Heart left ventricle (tissue), 16 donors: ENCODE measurements at regions of chr11 and their contacts with region 1.

Region 1: GRCh38 chr11:112289588-112290492 is 29.2 kb upstream of the PLET1 start:
- DNase-seq: peak; percentile 83 to 93 (median 88)
- ATAC-seq: peak; percentile 60 to 90 (median 87)
- H3K4me3 ChIP-seq: peak overlapping the region; percentile 49 to 89 (median 62)
- H3K27ac ChIP-seq: peak overlapping the region; percentile 24 to 91 (median 80)
- H3K4me1 ChIP-seq: peaks cover 0 to 44% (median 16%) of the 10 kb centered on the region in 12 donors
- H3K27me3 ChIP-seq: no peaks in the 10 kb centered on the region
- CTCF ChIP-seq: peak; percentile 66 to 96 (median 87)
- POLR2A ChIP-seq: peak in 1 of 2 donors; percentile 66

Region 2: DNA sequence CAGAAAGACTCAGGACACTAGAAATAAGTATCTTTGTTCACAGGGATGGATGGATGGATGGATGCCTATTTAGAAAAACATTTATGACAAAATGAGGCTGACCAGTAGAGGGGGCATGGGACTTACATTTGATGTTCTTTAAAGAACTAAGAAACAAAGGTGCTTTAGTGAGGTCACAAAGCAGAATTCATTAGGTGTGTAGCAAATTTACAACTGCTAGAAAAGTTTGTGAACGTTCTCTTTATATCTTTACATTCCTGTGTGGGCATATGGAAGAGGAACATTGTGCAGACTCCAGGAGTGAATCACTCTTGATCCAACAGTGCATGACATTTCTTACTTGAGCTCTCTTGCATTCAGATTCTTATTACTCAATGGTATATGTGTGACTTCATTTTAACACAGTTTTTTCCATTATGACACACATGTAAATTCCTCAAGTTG is 703.4 kb before region 1 on chr11:
- intact Hi-C with region 1: no loop called
- DNase-seq: no peak
- ATAC-seq: peak in 3 of 4 donors; percentile 42 to 62 (median 49)
- H3K4me3 ChIP-seq: no peak overlapping the region
- H3K27ac ChIP-seq: no peak overlapping the region
- H3K4me1 ChIP-seq: peaks cover 0 to 5% (median 0%) of the 10 kb centered on the region in 12 donors
- H3K27me3 ChIP-seq: no peaks in the 10 kb centered on the region
- CTCF ChIP-seq: peak; percentile 27 to 71 (median 56)
- POLR2A ChIP-seq: no peak

Region 3: GRCh38 chr11:111819161-111819828 is 470.5 kb before region 1 on chr11:
- intact Hi-C with region 1: no loop called
- DNase-seq: peak in 4 of 5 donors; percentile 38 to 69 (median 42)
- ATAC-seq: peak; percentile 86 to 95 (median 93)
- H3K4me3 ChIP-seq: no peak overlapping the region
- H3K27ac ChIP-seq: peak overlapping the region; percentile 44 to 91 (median 74)
- H3K4me1 ChIP-seq: peaks cover 5 to 32% (median 20%) of the 10 kb centered on the region in 12 donors
- H3K27me3 ChIP-seq: no peaks in the 10 kb centered on the region
- CTCF ChIP-seq: no peak
- POLR2A ChIP-seq: no peak

Region 4: GRCh38 chr11:112453601-112454577 is 164.0 kb after region 1 on chr11:
- intact Hi-C with region 1: loop called in 6 of 10 experiments (anchors 2 to 10 kb)
- DNase-seq: peak in 2 of 5 donors; percentile 44 to 51
- ATAC-seq: peak in 3 of 4 donors; percentile 37 to 61 (median 48)
- H3K4me3 ChIP-seq: no peak overlapping the region
- H3K27ac ChIP-seq: no peak overlapping the region
- H3K4me1 ChIP-seq: peaks cover 0 to 3% (median 0%) of the 10 kb centered on the region in 12 donors
- H3K27me3 ChIP-seq: no peaks in the 10 kb centered on the region
- CTCF ChIP-seq: peak; percentile 24 to 52 (median 32)
- POLR2A ChIP-seq: no peak

Region 5: DNA sequence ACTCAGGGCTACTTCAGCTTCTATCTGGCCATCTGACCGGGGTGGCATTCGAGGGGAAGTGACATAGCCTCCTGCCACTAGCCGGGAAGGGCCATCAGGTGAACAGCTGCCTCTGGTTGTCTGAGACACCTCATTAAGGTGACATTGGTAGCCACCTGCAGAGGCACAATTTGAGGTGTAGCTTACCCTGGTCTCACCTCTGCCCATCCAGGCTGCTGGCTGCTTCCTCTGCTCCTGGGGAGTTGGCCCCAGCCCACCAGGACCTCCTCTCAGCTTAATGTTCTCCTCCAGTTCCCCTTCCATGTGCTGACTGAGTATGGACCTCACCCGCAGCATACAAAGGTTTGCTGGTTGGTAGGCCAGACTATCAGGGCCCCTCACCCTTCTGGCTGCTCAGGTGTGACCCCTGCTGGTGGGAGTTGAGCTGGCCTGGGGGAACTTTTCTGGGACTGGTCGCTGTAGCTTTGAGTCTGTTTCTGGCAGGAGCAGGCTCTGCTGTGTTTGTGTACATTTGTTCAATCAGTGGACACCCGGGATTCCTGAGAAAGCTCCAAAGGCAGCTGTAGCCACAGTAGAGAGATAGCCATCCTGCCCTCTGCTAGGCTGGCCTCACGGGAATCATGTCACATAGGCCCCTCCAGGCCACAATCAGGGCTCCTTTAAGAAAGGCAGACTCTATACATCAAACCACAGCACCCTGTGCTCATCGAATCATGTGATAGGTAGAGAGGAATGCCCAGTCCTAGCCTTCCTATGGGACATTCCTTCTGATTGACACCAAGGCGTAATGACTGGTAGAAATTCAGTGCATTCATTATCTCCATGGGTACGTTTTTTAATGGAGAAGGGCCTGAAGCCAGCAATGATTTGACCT is 265.9 kb after region 1 on chr11:
- intact Hi-C with region 1: loop called (anchors 1 to 5 kb)
- DNase-seq: peak; percentile 35 to 72 (median 57)
- ATAC-seq: peak; percentile 43 to 88 (median 74)
- H3K4me3 ChIP-seq: no peak overlapping the region
- H3K27ac ChIP-seq: no peak overlapping the region
- H3K4me1 ChIP-seq: no peaks in the 10 kb centered on the region
- H3K27me3 ChIP-seq: no peaks in the 10 kb centered on the region
- CTCF ChIP-seq: peak; percentile 50 to 71 (median 66)
- POLR2A ChIP-seq: no peak

Region 6: GRCh38 chr11:112655371-112655770 is 365.5 kb after region 1 on chr11:
- intact Hi-C with region 1: loop called in 2 of 10 experiments (anchors 5 to 10 kb)
- DNase-seq: peak; percentile 81 to 91 (median 87)
- ATAC-seq: peak; percentile 50 to 84 (median 78)
- H3K4me3 ChIP-seq: no peak overlapping the region
- H3K27ac ChIP-seq: peak overlapping the region in 8 of 12 donors; percentile 4 to 65 (median 40)
- H3K4me1 ChIP-seq: peaks cover 0 to 51% (median 21%) of the 10 kb centered on the region in 12 donors
- H3K27me3 ChIP-seq: no peaks in the 10 kb centered on the region
- CTCF ChIP-seq: peak in 4 of 12 donors; percentile 24 to 42 (median 28)
- POLR2A ChIP-seq: no peak

Region 7: GRCh38 chr11:112795142-112795815 is 505.4 kb after region 1 on chr11:
- intact Hi-C with region 1: loop called in 1 of 10 experiments (anchors 10 kb)
- DNase-seq: no peak
- ATAC-seq: peak in 2 of 4 donors; percentile 47 to 50
- H3K4me3 ChIP-seq: no peak overlapping the region
- H3K27ac ChIP-seq: peak overlapping the region in 4 of 12 donors; percentile 19 to 42 (median 29)
- H3K4me1 ChIP-seq: peaks cover 0 to 39% (median 14%) of the 10 kb centered on the region in 12 donors
- H3K27me3 ChIP-seq: no peaks in the 10 kb centered on the region
- CTCF ChIP-seq: peak; percentile 21 to 63 (median 47)
- POLR2A ChIP-seq: no peak

Region 8: DNA sequence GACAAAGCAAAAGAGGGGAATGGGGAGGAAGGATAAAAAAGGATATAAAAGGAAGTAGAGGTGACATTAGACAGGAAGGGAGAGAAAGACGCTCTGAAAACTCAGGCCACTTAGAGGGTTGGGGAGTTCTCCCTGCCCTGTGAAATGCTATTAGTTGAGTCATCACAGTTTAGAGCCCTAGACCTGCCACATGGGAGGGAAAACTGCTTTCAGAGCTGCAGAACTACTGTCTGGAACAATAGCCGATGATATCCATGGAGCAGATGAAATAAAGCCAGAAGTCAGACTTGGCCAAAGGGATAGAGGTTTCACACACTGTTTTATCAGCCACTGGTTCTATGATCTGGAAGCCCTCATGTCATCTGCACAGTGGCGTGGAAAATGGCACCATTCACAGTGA is 829.2 kb after region 1 on chr11:
- intact Hi-C with region 1: loop called in 3 of 10 experiments (anchors 10 kb)
- DNase-seq: peak in 1 of 5 donors; percentile 18
- ATAC-seq: peak; percentile 62 to 87 (median 68)
- H3K4me3 ChIP-seq: no peak overlapping the region
- H3K27ac ChIP-seq: peak overlapping the region in 8 of 12 donors; percentile 24 to 63 (median 36)
- H3K4me1 ChIP-seq: peaks cover 0 to 54% (median 20%) of the 10 kb centered on the region in 12 donors
- H3K27me3 ChIP-seq: no peaks in the 10 kb centered on the region
- CTCF ChIP-seq: no peak
- POLR2A ChIP-seq: no peak